ENCODE measurements at regions of chr2 and their contacts with region 1.

Region 1: DNA sequence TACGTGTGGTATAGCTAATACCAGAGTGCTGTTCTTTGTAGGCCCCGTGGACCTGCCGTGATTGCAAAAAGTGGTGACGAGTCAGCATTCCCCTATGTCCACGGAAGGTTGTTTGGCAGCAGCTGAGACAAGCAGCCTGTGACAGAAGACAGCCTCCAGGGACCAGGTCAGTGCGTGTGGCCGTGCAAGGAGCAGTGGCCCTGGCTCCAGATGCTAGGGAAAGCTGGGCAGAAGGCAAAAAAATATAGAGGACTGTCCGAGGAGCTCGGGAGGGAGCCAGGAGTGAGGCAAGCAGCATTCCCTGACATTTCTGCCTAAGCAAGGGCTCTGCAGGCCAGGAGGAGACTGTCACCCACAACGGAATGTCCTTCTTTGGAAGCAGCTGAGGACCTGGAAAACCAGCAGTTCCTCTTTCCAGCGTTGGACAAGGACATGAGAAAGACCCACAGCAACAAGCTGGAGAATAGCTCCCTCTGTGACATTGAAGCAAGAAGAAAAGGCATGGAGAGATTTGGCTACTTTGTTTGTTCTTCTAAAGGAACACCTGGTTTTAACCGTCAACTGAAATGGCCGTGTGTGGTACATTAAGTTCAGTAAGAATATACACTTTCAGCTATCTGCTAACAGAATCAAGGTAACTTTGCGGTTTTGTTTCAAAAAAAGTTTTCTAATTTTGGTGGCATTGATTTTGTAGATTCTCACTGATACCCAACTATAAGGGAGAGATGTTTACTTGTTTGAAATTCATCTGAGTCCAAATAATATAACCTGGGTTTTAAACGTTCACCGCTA is 58.3 kb downstream of the NPAS2 start:
- DNase-seq: peak; percentile 32
- H3K4me3 ChIP-seq: no peak overlapping the region
- H3K27ac ChIP-seq: peak overlapping the region; percentile 90
- H3K4me1 ChIP-seq: peaks cover 69% of the 10 kb centered on the region
- H3K27me3 ChIP-seq: no peaks in the 10 kb centered on the region
- CTCF ChIP-seq: no peak
- POLR2A ChIP-seq: no peak

Region 2: GRCh38 chr2:100767810-100768806 is 110.1 kb before region 1 on chr2:
- CTCF ChIA-PET with region 1: no interaction called
- POLR2A ChIA-PET with region 1: no interaction called
- dilution Hi-C with region 1: no loop called
- intact Hi-C with region 1: no loop called
- DNase-seq: no peak
- H3K4me3 ChIP-seq: no peak overlapping the region
- H3K27ac ChIP-seq: peak overlapping the region; percentile 63
- H3K4me1 ChIP-seq: peaks cover 25% of the 10 kb centered on the region
- H3K27me3 ChIP-seq: no peaks in the 10 kb centered on the region
- CTCF ChIP-seq: no peak
- POLR2A ChIP-seq: no peak

Region 3: DNA sequence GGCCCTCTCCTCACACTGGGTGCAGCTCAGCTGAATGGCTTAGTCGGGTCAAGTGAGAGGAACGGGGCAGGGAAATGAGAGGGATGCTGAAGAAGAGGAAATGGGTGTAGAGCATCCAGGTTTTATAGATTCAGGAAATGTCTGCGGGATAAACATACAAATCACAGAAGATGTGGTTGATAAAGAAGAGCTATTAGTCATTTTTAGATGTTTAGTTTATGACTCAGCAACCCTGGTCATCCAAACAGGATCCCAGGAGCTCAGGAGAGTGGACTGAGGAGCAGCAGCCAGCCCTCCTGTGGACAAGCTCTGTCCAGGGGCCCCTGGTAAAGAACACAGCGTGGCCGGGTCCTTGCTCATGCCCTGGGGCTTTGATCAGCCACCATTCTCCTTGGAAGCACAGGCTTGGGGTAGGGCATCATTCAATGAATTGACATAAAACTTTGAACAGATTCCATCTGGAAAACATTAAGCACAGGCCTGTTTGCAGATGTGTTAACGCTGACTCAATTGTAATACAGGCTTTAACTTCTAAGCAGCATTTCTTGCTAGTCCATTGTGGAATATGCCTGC is 24.7 kb after region 1 on chr2:
- CTCF ChIA-PET with region 1: interaction called, 11 read pairs
- POLR2A ChIA-PET with region 1: no interaction called
- dilution Hi-C with region 1: no loop called
- intact Hi-C with region 1: loop called (anchors 1 kb)
- DNase-seq: peak; percentile 94
- H3K4me3 ChIP-seq: no peak overlapping the region
- H3K27ac ChIP-seq: peak overlapping the region; percentile 79
- H3K4me1 ChIP-seq: peaks cover 62% of the 10 kb centered on the region
- H3K27me3 ChIP-seq: no peaks in the 10 kb centered on the region
- CTCF ChIP-seq: peak in 1 of 2 donors; percentile 24
- POLR2A ChIP-seq: peak; percentile 78

Region 4: DNA sequence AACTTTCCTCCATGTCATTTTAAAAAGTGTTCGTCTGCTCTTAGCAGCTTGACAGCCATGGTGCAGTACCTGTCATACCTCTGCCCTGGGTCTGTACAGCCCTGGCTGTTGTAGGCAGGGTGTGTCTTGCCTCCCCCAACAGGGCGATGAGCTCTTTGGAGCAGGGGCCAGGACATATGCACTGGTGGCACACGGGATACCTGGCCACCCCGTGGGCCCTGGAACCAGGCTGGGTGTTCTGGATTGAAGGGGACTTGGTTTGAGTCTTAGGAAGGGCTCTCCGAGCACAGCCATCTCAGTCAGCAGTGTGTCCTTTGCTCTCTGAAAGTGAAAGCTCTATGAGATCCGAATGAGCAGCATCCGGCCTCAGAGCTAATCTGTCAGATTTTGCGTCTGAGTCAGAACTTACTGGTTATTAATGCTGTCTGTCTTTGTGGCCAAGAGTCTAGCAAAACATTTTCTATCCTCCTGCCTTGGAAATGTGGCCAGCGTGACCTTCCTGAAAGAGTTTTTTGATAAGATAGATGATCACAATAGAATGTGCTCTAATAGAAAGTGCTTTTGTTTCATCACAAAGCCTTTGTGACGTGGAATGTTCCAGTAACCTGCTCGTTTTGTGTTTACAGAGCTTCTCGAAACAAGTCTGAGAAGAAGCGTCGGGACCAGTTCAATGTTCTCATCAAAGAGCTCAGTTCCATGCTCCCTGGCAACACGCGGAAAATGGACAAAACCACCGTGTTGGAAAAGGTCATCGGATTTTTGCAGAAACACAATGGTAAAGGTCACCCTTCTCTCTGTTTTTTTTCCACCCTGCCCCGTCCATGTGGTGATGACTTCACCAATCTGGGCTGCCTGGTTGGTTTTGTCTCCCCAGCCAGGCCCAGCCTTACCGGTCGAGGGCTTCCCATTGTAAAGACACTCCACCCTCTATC is 46.6 kb after region 1 on chr2:
- CTCF ChIA-PET with region 1: interaction called, 5 read pairs
- POLR2A ChIA-PET with region 1: no interaction called
- dilution Hi-C with region 1: no loop called
- intact Hi-C with region 1: loop called (anchors 1 kb)
- DNase-seq: peak; percentile 99
- H3K4me3 ChIP-seq: peak overlapping the region in 2 of 3 experiments; percentile 11 to 29
- H3K27ac ChIP-seq: peak overlapping the region; percentile 96
- H3K4me1 ChIP-seq: peaks cover 28% of the 10 kb centered on the region
- H3K27me3 ChIP-seq: no peaks in the 10 kb centered on the region
- CTCF ChIP-seq: no peak
- POLR2A ChIP-seq: peak; percentile 7

Region 5: DNA sequence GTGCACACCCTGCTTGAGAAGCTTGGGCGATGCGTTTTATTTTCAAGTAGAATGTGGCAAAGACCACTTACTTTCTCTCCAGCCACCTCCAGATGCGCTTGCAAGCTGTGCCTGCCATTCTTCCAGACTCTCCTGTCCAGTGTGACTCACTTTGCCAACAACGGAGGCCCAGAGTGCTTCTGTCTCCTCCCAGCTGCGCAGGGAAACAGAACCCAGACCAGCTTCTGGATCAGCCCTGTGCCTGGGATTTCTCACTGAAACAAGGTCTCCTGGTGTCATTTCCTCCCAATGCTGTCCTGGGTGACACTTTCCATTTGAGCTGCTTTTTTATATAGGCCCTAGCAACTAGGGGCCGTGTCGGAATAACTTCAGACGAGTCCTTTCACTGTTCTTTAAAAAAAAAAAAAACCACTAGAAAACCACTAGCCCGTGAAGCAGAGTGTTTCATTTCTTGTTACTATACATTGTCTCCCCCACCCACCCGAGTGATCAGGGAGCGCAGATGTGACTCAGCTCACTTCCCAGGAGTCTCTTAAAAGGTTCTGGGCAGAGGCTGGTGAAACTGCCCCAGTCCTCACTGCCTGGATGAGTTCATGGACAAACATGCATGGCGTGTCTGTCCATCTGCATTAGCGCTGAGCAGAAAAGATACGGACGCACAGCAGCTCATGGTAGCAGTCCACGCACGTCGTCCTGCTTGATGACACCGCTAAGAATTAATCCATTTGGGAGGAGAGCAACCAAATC is 98.6 kb after region 1 on chr2:
- CTCF ChIA-PET with region 1: no interaction called
- POLR2A ChIA-PET with region 1: no interaction called
- dilution Hi-C with region 1: no loop called
- intact Hi-C with region 1: loop called (anchors 1 kb)
- DNase-seq: no peak
- H3K4me3 ChIP-seq: no peak overlapping the region
- H3K27ac ChIP-seq: no peak overlapping the region
- H3K4me1 ChIP-seq: peaks cover 11% of the 10 kb centered on the region
- H3K27me3 ChIP-seq: no peaks in the 10 kb centered on the region
- CTCF ChIP-seq: no peak
- POLR2A ChIP-seq: no peak

Region 6: DNA sequence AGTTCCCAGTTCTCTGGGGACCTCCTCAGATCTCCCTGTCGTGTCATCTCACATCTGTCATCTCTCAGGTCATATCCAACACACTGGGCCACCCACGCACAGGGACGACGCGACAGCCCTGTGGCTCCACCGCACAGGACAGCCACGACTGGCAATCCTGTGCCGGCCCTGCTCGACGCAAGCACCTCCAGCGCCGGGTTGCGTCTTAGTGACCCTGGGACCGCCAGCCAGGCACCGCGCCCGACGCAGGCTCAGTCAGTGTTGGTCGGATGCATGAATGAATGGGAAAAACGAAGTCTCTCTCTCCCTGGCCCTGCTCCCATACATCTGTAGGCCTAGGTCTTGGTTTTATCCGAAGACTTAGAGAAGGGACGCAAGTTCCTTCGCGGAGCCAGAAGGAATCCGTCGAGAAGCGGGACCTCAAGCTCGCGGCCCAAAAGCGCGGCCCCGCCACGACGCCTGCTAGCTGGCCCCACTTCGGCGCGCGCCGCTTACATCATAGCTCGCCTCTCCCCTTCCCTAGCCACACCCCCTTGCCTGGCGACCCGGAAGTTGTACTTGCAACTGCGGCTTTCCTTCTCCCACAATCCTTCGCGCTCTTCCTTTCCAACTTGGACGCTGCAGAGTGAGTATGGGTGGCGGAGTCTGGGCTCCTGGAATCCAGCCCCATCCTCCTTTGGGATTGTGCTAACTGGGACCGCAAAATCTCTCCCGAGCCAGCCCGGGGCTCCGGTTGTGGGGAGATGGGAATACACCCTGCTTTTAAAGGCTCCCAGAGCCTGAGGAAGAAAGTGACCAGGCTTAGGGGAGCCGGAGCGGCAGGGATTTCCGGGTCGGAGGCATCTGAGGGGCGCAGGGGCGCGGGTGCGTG is 123.7 kb after region 1 on chr2 and contains the start of gene RPL31:
- CTCF ChIA-PET with region 1: no interaction called
- POLR2A ChIA-PET with region 1: no interaction called
- dilution Hi-C with region 1: no loop called
- intact Hi-C with region 1: loop called (anchors 2 kb)
- DNase-seq: peak; percentile 95
- H3K4me3 ChIP-seq: peak within 1 kb of the TSS; percentile 82 to 94 (median 90)
- H3K27ac ChIP-seq: peak within 1 kb of the TSS; percentile 76
- H3K4me1 ChIP-seq: peaks cover 24% of the 10 kb centered on the region
- H3K27me3 ChIP-seq: no peaks in the 10 kb centered on the region
- CTCF ChIP-seq: no peak
- POLR2A ChIP-seq: peak; percentile 99
- total RNA-seq, gene RPL31: 1,337 and 1,355 TPM in 2 replicates

Measured in endothelial cell of umbilical vein (primary cell).